ENCODE measurements at regions of chr1 and their contacts with region 1.

Region 1: DNA sequence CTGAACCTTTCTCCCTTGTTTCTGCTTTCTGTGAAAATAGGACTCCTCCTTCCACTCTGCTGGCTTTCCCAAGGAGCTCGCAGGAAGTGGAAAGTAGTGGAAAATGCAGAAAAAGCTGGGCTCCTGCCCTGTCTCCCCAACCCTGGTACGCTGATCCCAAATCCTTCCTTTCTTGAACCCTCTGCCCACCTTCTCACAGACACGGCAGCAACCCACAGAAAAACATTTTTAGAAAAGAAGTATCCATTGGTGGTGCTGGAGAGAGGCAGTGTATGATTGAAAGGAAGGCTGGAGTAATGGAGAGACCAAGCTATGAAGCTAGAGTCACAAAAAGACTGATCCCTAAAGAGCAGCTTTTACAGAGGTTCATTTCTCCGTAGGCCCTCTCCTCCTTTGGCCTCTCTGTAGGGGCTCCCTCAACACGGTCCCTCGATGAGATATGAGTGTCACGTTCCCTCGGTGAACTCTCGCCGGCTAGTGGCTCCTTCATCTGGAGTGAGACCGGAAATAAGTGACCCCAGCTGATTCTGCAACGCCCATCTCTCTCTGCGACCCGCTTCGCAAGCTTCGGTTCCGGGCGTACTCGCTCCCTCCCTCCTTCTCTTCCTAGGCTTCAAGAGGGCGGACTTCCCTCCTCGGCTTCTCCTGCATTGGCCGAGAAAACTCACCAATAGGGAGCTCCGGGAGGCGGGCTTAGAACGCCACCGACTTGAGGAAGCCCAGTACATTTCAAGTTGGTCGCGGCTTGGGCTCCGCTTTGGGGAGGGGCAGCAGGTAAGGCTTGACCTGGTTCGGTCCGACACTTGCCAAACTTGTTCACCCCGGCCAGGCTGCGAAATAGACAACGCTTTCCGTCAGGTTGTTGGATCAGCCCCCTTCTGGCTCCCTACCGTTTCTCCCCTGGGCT is at the starts of genes ANKRD34A and POLR3GL:
- DNase-seq: peak; percentile 96 to 99 (median 97)
- ATAC-seq: peak; percentile 87 to 90
- H3K4me3 ChIP-seq: peak within 1 kb of the TSS; percentile 76
- H3K27ac ChIP-seq: peak within 1 kb of the TSS; percentile 84
- H3K4me1 ChIP-seq: peaks cover 10% of the 10 kb centered on the region
- H3K27me3 ChIP-seq: no peaks in the 10 kb centered on the region
- total RNA-seq, gene ANKRD34A: 1.7 to 3.9 (median 3.7) TPM
- total RNA-seq, gene POLR3GL: 51.4 to 54.4 (median 52.5) TPM

Region 2: DNA sequence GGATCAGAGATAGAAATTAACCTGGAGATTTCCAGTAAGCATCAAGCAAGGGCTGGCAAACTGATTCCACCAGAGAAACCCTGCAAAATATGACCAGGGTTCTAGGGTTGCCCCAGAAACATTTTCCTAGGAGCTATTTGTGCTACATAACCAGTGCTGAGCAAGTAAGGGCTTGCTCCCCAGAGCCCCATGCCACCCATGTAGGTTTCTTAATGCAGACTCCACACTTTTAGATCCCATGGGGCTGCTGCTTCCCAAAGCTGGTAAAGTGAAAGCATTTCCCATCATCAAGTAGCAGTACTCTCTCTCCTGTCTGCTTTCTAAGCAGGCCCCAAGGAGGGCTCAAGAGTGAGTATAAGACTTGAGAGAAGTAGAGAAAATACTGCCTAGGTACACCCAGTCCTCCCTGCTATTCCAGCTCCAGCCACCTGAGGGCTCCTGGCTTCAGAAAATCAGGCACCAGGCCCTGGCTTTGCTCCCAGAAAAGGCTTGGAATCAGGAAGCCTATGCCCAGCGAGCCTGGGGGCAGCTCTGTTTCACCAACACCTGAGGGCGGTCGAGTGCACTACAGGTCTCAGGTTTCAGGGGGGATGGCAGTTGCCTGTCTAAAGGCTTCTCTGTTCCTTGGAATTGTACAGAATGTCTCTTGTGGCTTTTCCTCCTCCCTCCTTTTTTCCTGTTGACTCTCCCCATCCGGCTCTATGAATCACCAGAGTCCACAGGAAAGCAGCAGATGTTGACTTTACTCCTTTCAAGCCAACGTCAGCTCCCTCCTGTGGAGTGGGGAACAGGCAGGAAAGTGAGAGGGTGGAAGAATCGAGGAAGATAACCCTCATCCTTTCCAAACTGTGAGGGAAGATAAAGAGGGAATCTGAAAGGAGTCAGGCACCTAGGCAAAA is 72.4 kb before region 1 on chr1:
- intact Hi-C with region 1: loop called in 1 of 4 experiments (anchors 10 kb)
- DNase-seq: peak; percentile 93 to 97 (median 94)
- ATAC-seq: peak; percentile 89 to 92
- H3K4me3 ChIP-seq: peak overlapping the region; percentile 2
- H3K27ac ChIP-seq: peak overlapping the region; percentile 86
- H3K4me1 ChIP-seq: peaks cover 9% of the 10 kb centered on the region
- H3K27me3 ChIP-seq: no peaks in the 10 kb centered on the region

Region 3: DNA sequence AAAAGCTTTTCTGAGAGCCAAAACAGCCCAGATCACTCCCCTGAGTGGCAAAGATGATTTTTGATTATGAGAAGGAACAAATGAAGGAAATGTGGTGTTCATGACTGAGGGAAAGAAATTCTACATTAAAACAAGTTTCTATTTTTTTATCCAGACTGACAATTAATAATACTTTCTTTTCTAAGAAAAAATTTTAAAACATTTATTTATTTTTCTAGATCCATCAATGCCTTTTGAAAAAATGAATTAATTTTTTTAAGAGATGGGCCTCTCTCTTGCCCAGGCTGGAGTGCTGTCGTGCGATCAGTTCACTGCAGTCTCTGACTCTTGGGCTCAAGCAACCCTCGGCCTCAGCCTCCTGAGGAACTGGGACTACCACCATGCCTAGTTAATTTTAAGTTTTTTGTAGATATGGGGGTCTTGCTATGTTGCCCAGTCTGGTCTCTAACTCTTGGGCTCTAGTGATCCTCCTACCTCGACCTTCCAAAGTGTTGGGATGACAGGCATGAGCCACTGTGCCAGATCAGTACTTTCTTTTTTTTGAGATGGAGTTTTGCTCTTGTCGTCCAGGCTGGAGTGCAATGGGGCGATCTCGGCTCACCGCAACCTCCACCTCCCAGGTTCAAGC is 43.4 kb after region 1 on chr1:
- intact Hi-C with region 1: loop called in 1 of 4 experiments (anchors 5 kb)
- DNase-seq: no peak
- ATAC-seq: peak; percentile 13 to 18
- H3K4me3 ChIP-seq: no peak overlapping the region
- H3K27ac ChIP-seq: peak overlapping the region; percentile 72
- H3K4me1 ChIP-seq: peaks cover 4% of the 10 kb centered on the region
- H3K27me3 ChIP-seq: no peaks in the 10 kb centered on the region

Region 4: DNA sequence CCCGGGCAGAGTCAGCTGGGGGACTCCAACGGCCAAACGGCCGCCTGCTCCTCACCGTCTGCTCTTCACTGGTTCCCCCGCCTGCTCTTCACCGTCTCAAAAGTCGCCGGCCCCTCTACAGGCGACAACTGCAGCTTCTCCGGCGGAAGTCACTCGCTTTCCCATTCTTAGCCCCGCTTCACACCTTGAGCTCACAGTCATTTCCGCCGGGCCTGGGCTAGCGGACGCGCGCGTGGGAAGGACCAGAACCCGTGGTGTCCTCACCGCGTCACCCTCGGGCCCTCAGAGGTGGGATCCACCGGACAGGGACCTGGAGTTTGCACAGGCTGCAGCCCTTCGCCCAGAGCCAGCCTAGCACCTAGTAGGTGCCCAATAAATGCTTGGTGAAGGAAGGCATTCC is 85.2 kb after region 1 on chr1:
- intact Hi-C with region 1: no loop called
- DNase-seq: no peak
- ATAC-seq: no peak
- H3K4me3 ChIP-seq: no peak overlapping the region
- H3K27ac ChIP-seq: no peak overlapping the region
- H3K4me1 ChIP-seq: no peaks in the 10 kb centered on the region
- H3K27me3 ChIP-seq: no peaks in the 10 kb centered on the region